ENCODE measurements at regions of chr3 and their contacts with region 1.

Region 1: GRCh38 chr3:125437631-125438435 is 62.7 kb upstream of the ZNF148 start:
- DNase-seq: peak; percentile 27 to 78
- H3K4me3 ChIP-seq: no peak overlapping the region
- H3K4me1 ChIP-seq: peaks cover 18% of the 10 kb centered on the region
- H3K27me3 ChIP-seq: no peaks in the 10 kb centered on the region

Region 2: DNA sequence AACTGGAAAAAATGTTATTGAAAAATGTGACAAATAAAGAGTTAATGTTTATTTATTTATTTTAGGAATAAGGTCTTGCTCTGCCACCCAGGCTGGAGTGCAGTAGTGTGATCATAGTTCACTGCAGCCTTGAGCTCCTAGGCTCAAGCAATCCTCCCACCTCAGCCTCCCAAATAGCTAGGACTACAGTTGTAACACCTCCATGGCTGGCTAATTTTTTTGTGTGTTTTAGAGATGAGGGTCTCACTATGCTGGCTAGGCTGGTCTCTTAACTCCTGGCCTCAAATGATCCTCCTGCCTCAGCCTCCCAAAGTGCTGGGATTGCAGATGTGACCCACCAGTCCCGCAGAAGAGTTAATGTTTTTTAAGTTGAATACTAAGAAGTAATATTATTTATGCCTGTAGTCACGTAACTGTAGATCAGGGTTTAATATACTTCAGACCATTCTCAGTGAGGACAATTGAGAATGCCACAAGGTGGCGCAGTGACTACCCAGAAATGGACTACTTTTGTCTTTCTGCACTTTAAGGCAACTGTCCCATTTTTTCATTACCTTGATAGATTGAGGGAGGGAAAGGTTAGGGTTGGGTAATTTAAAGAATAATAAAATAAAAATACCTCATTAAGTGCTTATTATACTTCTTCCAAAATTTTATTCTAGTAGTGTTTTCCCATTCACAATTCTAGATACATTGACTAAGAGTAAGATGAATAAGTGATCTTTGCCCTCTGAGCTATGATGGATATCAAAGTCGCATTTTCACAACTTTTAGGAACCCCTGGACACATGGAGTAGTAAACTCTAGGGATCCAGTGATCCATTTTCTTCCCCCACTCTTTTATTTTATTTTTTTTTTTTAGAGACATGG is 509.3 kb before region 1 on chr3:
- in situ Hi-C with region 1: loop called (anchors 25 kb)
- DNase-seq: peak; percentile 71 to 79
- H3K4me3 ChIP-seq: no peak overlapping the region
- H3K4me1 ChIP-seq: no peaks in the 10 kb centered on the region
- H3K27me3 ChIP-seq: peaks cover 14% of the 10 kb centered on the region

Measured in HAP-1 (cell line).